IMR-90 (cell line): ENCODE measurements at regions of chr13 and their contacts with region 1.

Region 1: GRCh38 chr13:35953537-35954206 is 177.5 kb downstream of the DCLK1 start:
- DNase-seq: peak; percentile 94
- ATAC-seq: peak; percentile 98
- H3K4me3 ChIP-seq: no peak overlapping the region
- H3K27ac ChIP-seq: no peak overlapping the region
- H3K4me1 ChIP-seq: no peaks in the 10 kb centered on the region
- H3K27me3 ChIP-seq: no peaks in the 10 kb centered on the region; the same call in 1 of the 2 replicates
- CTCF ChIP-seq: peak; percentile 82
- POLR2A ChIP-seq: no peak
- RAD21 ChIP-seq: peak; percentile 77

Region 2: GRCh38 chr13:35129500-35129899 is 824.2 kb before region 1 on chr13:
- CTCF ChIA-PET with region 1: no interaction called
- POLR2A ChIA-PET with region 1: no interaction called
- dilution Hi-C with region 1: no loop called
- in situ Hi-C with region 1: no loop called
- intact Hi-C with region 1: no loop called
- DNase-seq: no peak
- ATAC-seq: no peak
- H3K4me3 ChIP-seq: no peak overlapping the region
- H3K27ac ChIP-seq: no peak overlapping the region
- H3K4me1 ChIP-seq: no peaks in the 10 kb centered on the region
- H3K27me3 ChIP-seq: no peaks in the 10 kb centered on the region
- CTCF ChIP-seq: no peak
- POLR2A ChIP-seq: no peak
- RAD21 ChIP-seq: no peak

Region 3: GRCh38 chr13:35179494-35179893 is 774.2 kb before region 1 on chr13:
- CTCF ChIA-PET with region 1: no interaction called
- POLR2A ChIA-PET with region 1: no interaction called
- dilution Hi-C with region 1: no loop called
- in situ Hi-C with region 1: no loop called
- intact Hi-C with region 1: loop called (anchors 10 kb)
- DNase-seq: no peak
- ATAC-seq: no peak; the same call in 1 of the 2 replicates
- H3K4me3 ChIP-seq: no peak overlapping the region
- H3K27ac ChIP-seq: no peak overlapping the region
- H3K4me1 ChIP-seq: no peaks in the 10 kb centered on the region
- H3K27me3 ChIP-seq: no peaks in the 10 kb centered on the region
- CTCF ChIP-seq: no peak
- POLR2A ChIP-seq: no peak
- RAD21 ChIP-seq: no peak

Region 4: DNA sequence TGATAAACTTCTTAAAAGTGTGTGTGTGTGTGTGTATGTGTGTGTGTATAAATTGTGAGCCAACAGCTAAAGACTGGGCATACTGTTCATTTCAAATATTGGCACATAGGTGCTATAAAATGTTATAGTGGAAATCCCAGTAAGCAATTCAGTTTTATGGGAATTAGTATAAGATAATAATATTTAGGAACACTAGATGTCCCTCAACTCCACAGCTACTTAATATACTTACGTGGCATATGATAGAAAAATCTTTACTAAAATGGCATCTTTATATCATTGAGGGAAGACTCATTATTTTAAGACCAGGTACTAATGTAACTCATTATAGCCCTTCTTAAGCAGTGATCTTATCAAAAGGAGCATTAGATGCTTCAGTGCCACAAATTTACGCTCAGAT is 743.4 kb before region 1 on chr13:
- CTCF ChIA-PET with region 1: no interaction called
- POLR2A ChIA-PET with region 1: no interaction called
- dilution Hi-C with region 1: no loop called
- in situ Hi-C with region 1: loop called (anchors 25 kb)
- intact Hi-C with region 1: no loop called
- DNase-seq: no peak
- ATAC-seq: no peak
- H3K4me3 ChIP-seq: no peak overlapping the region
- H3K27ac ChIP-seq: no peak overlapping the region
- H3K4me1 ChIP-seq: no peaks in the 10 kb centered on the region
- H3K27me3 ChIP-seq: no peaks in the 10 kb centered on the region
- CTCF ChIP-seq: no peak
- POLR2A ChIP-seq: no peak
- RAD21 ChIP-seq: no peak

Region 5: DNA sequence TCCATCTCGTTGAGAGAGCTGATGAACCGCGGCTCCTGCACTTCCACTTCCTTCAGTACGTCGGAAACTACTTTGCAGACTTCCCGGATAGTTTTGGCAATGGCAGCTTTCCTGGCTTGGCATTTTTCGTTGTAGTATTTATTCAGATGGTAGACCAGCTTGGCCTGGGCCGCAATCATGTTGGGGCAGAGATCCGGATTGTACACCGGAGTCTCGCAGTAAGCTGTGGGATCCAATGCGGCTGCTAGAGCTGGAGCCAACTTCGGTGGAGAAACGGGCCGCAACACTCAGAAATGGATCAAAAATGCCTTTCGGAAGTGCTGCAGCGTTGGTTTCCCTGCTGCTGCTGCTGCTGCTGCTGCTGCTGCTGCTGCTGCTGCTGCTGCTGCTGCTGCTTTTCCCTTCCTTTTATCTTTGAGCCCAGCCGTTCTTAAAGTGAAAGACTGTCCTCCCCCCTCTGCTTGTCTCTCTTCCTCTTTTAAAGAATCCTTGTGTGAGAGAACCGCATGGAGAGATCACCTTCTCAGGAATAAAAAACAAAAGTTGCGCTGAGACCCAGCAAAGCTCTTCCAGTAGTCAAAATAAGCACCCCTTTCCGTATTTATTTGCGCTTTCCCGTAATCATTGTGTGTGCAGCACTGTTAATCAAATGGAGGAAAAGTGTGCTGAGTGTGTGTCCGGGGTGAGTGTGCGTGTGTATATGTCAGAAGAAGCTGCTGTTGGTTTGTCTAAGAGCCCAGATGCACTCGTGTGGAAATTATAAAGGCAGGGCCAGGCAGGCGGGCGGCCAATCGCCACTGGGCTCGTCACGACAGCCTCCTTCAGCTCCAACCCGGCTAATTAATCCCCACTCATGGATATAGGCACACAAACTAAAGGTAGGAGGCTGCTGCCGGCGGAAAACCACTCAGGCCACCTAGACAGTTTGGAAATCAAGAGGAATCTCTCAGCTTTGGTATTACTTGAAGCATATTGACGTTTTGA is 477.4 kb before region 1 on chr13 and contains the start of gene MAB21L1:
- CTCF ChIA-PET with region 1: no interaction called
- POLR2A ChIA-PET with region 1: no interaction called
- dilution Hi-C with region 1: no loop called
- in situ Hi-C with region 1: no loop called
- intact Hi-C with region 1: loop called (anchors 10 kb)
- DNase-seq: peak; percentile 19
- ATAC-seq: peak; percentile 69
- H3K4me3 ChIP-seq: peak within 1 kb of the TSS; percentile 43
- H3K27ac ChIP-seq: no peak within 1 kb of the TSS
- H3K4me1 ChIP-seq: no peaks in the 10 kb centered on the region
- H3K27me3 ChIP-seq: peaks cover 54% of the 10 kb centered on the region
- CTCF ChIP-seq: no peak
- POLR2A ChIP-seq: no peak
- RAD21 ChIP-seq: no peak
- total RNA-seq, gene MAB21L1: 0.72 and 0.83 TPM in 2 replicates

Region 6: DNA sequence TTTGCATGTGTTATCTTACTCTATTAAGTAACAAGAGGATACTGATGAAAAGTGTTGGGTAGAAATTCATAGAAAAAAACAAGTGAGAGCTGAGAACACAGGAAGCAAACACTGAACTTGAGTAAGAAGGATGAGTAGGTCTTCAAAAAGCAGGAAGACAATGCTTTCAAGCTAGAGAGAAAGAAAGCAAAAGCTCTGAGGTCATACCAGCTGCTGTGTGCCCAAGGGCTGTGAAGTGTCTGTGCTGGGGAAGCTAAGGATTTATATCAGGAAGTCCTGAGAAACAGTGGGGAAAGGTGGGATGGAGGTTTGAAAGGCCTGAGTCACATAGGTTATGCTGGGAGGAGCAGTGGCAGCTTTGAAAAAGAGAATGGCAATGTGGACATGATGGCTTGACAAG is 331.7 kb before region 1 on chr13:
- CTCF ChIA-PET with region 1: no interaction called
- POLR2A ChIA-PET with region 1: no interaction called
- dilution Hi-C with region 1: no loop called
- in situ Hi-C with region 1: loop called (anchors 10 kb)
- intact Hi-C with region 1: no loop called
- DNase-seq: peak; percentile 2
- ATAC-seq: no peak
- H3K4me3 ChIP-seq: no peak overlapping the region
- H3K27ac ChIP-seq: no peak overlapping the region
- H3K4me1 ChIP-seq: no peaks in the 10 kb centered on the region
- H3K27me3 ChIP-seq: no peaks in the 10 kb centered on the region
- CTCF ChIP-seq: no peak
- POLR2A ChIP-seq: no peak
- RAD21 ChIP-seq: no peak

Region 7: DNA sequence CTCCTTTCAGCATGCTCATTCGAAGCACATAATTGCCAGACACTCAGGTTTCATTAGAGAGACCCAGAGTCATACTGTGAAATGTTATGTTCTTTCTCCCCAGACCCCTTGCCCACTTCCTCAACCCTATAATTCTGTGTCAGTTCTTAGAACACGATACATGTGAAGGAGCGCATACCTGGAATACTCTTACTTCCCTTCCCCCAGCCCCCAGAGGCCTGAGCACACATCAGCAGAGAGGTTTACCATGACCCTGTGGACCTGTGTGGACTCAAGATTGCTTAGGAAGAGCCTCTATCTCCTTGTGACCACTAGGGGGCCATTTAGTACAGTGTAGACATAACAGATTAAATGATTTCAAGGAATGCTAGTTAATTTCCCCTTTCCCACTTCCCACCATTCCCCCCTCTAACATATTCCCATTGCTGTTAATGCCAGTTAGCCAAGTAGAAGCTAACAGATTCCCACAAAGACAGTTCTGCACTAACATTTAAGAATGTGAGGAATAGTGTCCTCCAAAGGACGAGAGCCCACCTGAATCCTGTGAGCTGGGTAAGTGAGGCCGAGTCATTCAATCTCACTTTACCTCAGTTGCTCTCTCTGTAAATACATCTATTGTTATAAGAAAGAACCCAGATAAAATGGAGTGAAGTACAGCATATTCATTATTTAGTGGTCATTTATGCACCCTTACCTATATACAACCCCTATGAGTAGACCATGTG is 323.0 kb before region 1 on chr13:
- CTCF ChIA-PET with region 1: interaction called, 4 read pairs
- POLR2A ChIA-PET with region 1: no interaction called
- dilution Hi-C with region 1: no loop called
- in situ Hi-C with region 1: loop called (anchors 10 kb)
- intact Hi-C with region 1: loop called (anchors 1 kb)
- DNase-seq: peak; percentile 70
- ATAC-seq: peak; percentile 98
- H3K4me3 ChIP-seq: no peak overlapping the region
- H3K27ac ChIP-seq: no peak overlapping the region
- H3K4me1 ChIP-seq: no peaks in the 10 kb centered on the region
- H3K27me3 ChIP-seq: no peaks in the 10 kb centered on the region
- CTCF ChIP-seq: peak; percentile 68
- POLR2A ChIP-seq: no peak
- RAD21 ChIP-seq: peak; percentile 66

Region 8: DNA sequence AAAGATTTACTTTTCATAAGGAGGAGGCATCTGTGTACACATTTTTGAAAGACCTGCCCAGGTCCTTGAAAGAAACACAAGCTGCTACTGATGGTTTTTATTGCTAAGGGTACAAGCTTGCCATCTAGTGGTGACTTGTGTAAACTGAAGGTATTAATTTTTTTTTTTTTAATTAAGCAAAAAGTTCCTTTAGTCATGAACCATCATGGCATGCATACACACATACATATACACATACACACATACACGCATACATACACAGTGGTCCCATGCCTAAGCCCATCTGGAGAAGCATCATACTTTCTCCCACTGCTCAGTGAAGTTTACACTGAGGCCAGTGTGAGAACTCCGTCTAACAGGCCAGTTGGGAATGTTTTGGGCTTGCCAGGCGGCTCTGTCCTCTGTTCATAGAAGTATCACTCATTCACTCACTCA is 135.0 kb before region 1 on chr13:
- CTCF ChIA-PET with region 1: interaction called, 3 read pairs
- POLR2A ChIA-PET with region 1: no interaction called
- dilution Hi-C with region 1: no loop called
- in situ Hi-C with region 1: no loop called
- intact Hi-C with region 1: loop called (anchors 1 kb)
- DNase-seq: peak; percentile 60
- ATAC-seq: peak; percentile 77
- H3K4me3 ChIP-seq: no peak overlapping the region
- H3K27ac ChIP-seq: no peak overlapping the region
- H3K4me1 ChIP-seq: no peaks in the 10 kb centered on the region
- H3K27me3 ChIP-seq: no peaks in the 10 kb centered on the region; the same call in 1 of the 2 replicates
- CTCF ChIP-seq: peak; percentile 68
- POLR2A ChIP-seq: no peak
- RAD21 ChIP-seq: peak; percentile 61